ENCODE measurements at regions of chr5 and their contacts with region 1.

Region 1: DNA sequence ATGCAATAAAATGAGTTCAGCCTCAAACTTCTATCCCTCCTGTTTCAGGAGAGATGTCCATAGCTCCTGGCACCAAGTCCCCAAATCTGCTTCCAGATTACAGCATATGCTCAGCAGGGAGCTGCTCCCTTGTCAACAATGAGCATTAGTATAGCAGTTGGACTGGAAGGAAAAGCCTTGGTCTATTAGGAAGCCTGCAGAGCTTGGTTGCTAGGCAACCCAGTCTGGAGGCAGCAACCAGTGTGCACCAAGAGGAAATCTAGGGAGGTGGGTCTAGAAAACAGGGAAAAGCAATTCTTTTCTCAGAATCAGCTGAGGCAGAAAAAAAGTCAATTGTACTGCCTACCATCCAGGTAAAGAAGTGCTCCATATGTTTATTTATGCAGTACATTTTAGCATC is 229.5 kb upstream of the NMUR2 start:
- DNase-seq: no peak
- H3K27ac ChIP-seq: no peak overlapping the region
- CTCF ChIP-seq: no peak

Region 2: DNA sequence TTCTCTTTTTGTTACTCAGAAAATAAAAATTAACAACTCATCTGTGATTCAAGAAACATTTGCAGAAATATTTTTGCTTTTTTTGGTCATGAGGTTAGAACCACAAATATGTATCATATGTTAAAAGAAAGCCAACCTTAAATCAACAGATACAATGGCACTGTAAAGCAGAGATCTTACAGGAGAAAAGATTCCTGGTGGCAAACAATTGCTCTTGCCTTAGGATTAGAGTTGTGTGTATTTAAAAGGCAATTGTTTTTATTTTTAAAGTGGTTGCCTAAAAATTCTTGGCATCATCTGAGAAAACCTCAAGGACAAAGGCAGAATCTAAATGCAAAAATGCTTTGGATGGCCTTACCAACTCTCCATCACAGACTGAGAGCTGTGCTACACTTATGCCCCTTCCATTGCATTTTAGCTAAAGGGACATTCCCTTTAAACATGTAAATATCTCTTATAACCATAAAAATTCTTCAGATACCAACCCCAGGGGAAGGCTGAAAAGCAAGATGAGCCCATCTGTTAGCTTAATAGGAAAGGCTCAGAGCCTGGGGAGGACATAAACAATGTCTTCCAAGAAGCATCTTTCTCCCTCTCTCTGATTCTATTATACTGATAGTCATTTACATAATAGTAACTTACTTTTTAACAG is 1303.7 kb after region 1 on chr5:
- CTCF ChIA-PET with region 1: interaction called, 11 read pairs
- POLR2A ChIA-PET with region 1: no interaction called
- DNase-seq: no peak
- H3K27ac ChIP-seq: no peak overlapping the region
- CTCF ChIP-seq: no peak

Measured in RWPE1 (cell line).